PC-3 (cell line): ENCODE measurements at regions of chr11 and their contacts with region 1.

Region 1: GRCh38 chr11:117089685-117090084 is 8.5 kb downstream of the SIK3 start:
- DNase-seq: peak; percentile 92
- ATAC-seq: peak; percentile 96
- H3K4me3 ChIP-seq: peak overlapping the region; percentile 49
- H3K27ac ChIP-seq: peak overlapping the region; percentile 49
- H3K4me1 ChIP-seq: peaks cover 27% of the 10 kb centered on the region
- H3K27me3 ChIP-seq: no peaks in the 10 kb centered on the region
- CTCF ChIP-seq: no peak

Region 2: GRCh38 chr11:117019871-117020270 is 69.8 kb before region 1 on chr11:
- CTCF ChIA-PET with region 1: no interaction called
- POLR2A ChIA-PET with region 1: no interaction called
- intact Hi-C with region 1: loop called (anchors 2 kb)
- DNase-seq: no peak
- ATAC-seq: no peak
- H3K4me3 ChIP-seq: no peak overlapping the region
- H3K27ac ChIP-seq: peak overlapping the region; percentile 63
- H3K4me1 ChIP-seq: peaks cover 24% of the 10 kb centered on the region
- H3K27me3 ChIP-seq: no peaks in the 10 kb centered on the region
- CTCF ChIP-seq: no peak